ENCODE measurements at regions of chr1 and their contacts with region 1.

Region 1: GRCh38 chr1:210311726-210312493 is 16.8 kb upstream of the HHAT start:
- DNase-seq: no peak
- ATAC-seq: peak; percentile 19
- H3K4me3 ChIP-seq: no peak overlapping the region
- H3K4me1 ChIP-seq: no peaks in the 10 kb centered on the region
- CTCF ChIP-seq: no peak

Region 2: DNA sequence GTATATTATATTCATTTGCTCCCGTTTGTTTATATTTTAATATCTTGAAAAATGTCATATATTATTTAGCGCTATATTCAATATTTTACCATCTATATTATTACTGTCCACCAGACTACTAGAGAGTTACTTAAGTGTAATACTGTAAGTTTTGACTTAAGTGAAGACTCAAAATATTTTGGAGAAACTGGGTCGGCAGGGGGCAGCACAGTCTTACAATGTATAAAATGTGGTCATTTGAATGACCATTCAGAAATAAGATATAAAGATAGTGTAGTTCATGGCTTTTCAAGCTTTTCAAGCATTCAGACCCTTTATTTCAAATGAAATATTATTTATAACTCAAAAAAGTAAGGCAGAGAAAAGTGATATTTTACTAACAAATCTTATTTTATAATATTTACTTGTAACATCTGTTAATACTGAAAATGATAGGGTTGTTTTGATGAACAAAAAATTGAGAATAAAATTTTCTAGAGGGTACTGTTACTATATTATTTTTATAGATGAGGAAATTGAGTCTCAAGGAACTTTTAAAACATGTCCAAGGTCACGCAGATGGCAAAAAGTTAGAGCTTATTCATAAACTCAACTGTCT is 168.3 kb before region 1 on chr1:
- intact Hi-C with region 1: loop called (anchors 5 kb)
- DNase-seq: peak in 2 of 3 donors; percentile 65 to 96
- ATAC-seq: peak; percentile 34
- H3K4me3 ChIP-seq: no peak overlapping the region
- H3K4me1 ChIP-seq: no peaks in the 10 kb centered on the region
- CTCF ChIP-seq: no peak